Mammary epithelial cell (primary cell): ENCODE measurements at regions of chr5 and their contacts with region 1.

Region 1: GRCh38 chr5:157464519-157465171 is 4.6 kb downstream of the NIPAL4 start:
- DNase-seq: peak; percentile 96
- H3K4me3 ChIP-seq: no peak overlapping the region
- H3K27ac ChIP-seq: peak overlapping the region; percentile 78
- H3K4me1 ChIP-seq: peaks cover 50% of the 10 kb centered on the region
- H3K27me3 ChIP-seq: no peaks in the 10 kb centered on the region
- CTCF ChIP-seq: no peak

Region 2: GRCh38 chr5:157390551-157391297 is 73.9 kb before region 1 on chr5:
- CTCF ChIA-PET with region 1: no interaction called
- dilution Hi-C with region 1: no loop called
- in situ Hi-C with region 1: no loop called
- intact Hi-C with region 1: loop called (anchors 2 kb)
- DNase-seq: peak; percentile 98
- H3K4me3 ChIP-seq: no peak overlapping the region
- H3K27ac ChIP-seq: peak overlapping the region; percentile 50
- H3K4me1 ChIP-seq: peaks cover 31% of the 10 kb centered on the region
- H3K27me3 ChIP-seq: no peaks in the 10 kb centered on the region
- CTCF ChIP-seq: no peak

Region 3: DNA sequence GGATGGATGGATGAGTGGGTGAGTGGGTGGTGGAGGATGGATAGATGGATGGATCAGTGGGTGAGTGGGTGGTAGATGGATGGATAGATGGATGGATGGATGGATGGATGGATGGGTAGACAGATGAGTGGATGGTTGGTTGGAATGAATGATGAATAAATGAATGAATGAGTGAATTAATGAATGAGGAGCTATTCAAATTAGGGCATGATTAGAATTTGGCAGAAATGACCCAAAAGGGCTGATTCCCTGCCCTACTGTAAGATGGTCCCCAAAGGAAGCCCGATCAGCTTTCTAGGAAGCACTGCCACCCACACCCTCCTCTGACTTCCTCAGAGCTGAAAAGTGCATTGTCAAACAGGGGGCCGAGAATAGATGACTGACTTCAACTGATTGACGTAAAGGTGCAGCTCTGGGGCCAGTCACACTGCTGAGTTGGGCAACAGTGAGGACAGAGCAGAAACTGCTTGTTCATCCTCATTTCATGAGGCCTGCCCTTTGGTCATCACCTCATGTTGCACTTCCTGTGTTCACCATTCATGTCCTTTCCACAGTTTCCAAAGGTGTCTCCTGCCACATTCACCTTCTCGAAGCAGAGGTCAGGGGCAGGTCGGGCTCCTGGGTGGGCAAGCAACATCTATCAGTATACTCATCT is 29.7 kb after region 1 on chr5:
- CTCF ChIA-PET with region 1: no interaction called
- dilution Hi-C with region 1: no loop called
- in situ Hi-C with region 1: no loop called
- intact Hi-C with region 1: no loop called
- DNase-seq: no peak
- H3K4me3 ChIP-seq: no peak overlapping the region
- H3K27ac ChIP-seq: no peak overlapping the region
- H3K4me1 ChIP-seq: no peaks in the 10 kb centered on the region
- H3K27me3 ChIP-seq: no peaks in the 10 kb centered on the region
- CTCF ChIP-seq: no peak

Region 4: DNA sequence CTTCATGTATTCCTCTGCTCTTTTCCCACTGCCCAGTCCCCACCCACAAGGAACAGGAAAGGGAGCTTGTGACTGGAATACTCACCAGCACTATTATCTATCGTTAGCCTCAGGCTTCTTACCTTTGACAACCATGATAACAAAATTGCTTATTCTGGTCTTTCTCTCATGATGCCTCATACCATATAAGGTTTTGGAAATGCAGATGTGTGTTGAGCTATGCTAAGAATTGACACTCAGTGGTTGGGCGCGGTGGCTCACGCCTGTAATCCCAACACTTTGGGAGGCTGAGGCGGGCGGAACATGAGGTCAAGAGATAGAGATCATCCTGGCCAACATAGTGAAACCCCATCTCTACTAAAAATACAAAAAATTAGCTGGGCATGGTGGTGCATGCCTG is 162.2 kb after region 1 on chr5:
- CTCF ChIA-PET with region 1: no interaction called
- dilution Hi-C with region 1: no loop called
- in situ Hi-C with region 1: no loop called
- intact Hi-C with region 1: no loop called
- DNase-seq: no peak
- H3K4me3 ChIP-seq: no peak overlapping the region
- H3K27ac ChIP-seq: no peak overlapping the region
- H3K4me1 ChIP-seq: no peaks in the 10 kb centered on the region
- H3K27me3 ChIP-seq: no peaks in the 10 kb centered on the region
- CTCF ChIP-seq: no peak